Panc1 (cell line): ENCODE measurements at regions of chr15 and their contacts with region 1.

Region 1: DNA sequence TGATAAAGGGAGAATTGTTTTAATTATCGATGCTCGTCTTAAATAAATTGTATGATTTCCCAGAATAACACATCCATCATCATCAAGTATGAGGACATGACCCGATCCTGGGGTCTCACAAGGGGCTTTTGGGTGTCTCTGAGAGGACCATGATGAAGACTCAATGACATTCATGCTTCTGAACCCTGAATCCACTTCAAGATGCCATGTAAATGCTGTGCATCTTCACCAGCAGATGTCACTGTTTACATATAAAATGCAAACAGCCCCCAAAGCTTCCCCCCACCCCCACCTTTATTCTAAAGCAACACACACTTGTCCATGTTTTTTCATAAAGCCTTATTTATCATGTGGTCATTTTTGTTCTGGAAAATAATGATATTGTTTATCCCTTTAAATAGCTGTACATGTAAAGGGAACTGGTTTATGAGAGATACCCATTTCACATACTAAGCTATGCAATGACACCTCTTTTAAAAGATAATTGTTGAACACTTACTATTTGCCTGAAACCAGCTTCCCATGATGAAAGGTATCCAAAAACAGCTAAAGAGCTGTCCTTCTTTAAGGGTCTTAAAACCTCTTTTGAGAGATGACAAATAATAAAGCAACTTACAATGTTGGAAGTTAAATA is 69.7 kb upstream of the UBE3A start:
- DNase-seq: no peak
- ATAC-seq: no peak
- H3K4me3 ChIP-seq: no peak overlapping the region
- H3K27ac ChIP-seq: no peak overlapping the region
- H3K4me1 ChIP-seq: no peaks in the 10 kb centered on the region
- H3K27me3 ChIP-seq: no peaks in the 10 kb centered on the region
- CTCF ChIP-seq: peak; percentile 75

Region 2: DNA sequence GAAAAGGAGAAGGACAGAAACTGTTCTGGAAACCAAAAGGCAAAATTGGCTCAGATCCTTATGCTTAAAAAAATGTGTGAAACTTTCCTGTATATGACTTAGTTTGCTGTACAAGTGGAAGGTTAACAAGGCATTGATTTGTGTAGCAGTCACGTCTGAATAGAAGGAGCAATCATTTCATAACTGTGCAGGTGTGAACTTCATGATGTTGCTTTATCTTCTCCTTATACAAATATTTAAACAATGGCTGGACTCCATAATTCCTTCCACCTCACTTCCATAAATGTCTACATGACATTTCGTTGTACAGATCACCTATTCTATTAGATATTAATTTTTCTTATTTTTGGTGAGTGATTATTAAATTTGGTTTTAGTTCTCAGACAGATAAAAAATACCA is 1215.6 kb before region 1 on chr15:
- CTCF ChIA-PET with region 1: no interaction called
- POLR2A ChIA-PET with region 1: no interaction called
- in situ Hi-C with region 1: no loop called
- intact Hi-C with region 1: no loop called
- DNase-seq: no peak
- ATAC-seq: no peak
- H3K4me3 ChIP-seq: no peak overlapping the region
- H3K27ac ChIP-seq: no peak overlapping the region
- H3K4me1 ChIP-seq: no peaks in the 10 kb centered on the region
- H3K27me3 ChIP-seq: no peaks in the 10 kb centered on the region
- CTCF ChIP-seq: no peak

Region 3: DNA sequence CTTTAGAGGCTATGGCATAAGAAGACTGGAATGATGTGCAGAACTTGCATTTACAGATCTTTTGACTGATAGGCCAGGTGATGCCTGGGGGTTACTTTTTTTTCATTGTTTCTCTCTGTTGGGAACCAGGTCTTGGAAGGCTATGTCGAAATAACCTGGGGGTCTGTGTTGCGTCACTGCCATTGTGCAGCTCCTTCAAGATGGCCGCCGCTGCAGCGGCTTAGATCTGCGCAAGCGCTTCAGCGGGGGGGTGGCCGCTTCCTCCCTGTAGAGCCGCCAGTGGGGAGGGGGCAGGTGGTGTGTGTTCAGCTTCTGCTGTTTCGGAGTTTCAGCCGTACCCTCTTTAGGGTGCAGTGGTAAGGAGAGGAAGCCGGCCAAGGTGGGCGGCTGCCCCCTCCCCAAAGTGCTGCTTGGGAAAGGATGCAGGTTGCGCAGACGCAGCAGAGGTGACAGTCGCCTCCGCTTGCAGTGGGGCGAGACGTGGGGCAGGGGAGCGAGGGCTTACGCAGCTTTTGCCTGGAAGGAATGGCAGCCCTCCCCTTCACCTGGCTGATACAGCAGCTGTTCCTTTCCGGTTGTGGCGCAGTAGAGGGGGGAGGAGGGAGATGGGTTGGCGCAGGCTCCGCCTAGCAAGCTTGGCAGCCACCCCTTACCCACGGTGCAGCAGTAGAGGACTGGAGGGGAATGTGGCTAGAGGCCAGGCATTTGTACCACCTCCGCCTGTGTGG is 552.2 kb before region 1 on chr15:
- CTCF ChIA-PET with region 1: interaction called, 10 read pairs
- POLR2A ChIA-PET with region 1: no interaction called
- in situ Hi-C with region 1: no loop called
- intact Hi-C with region 1: no loop called
- DNase-seq: peak; percentile 25
- ATAC-seq: peak; percentile 92
- H3K4me3 ChIP-seq: peak overlapping the region; percentile 81 to 94
- H3K27ac ChIP-seq: peak overlapping the region; percentile 88
- H3K4me1 ChIP-seq: peaks cover 11% of the 10 kb centered on the region; the same call in 1 of the 2 replicates
- H3K27me3 ChIP-seq: no peaks in the 10 kb centered on the region
- CTCF ChIP-seq: no peak

Region 4: GRCh38 chr15:25568751-25569150 is 60.3 kb after region 1 on chr15:
- CTCF ChIA-PET with region 1: no interaction called
- POLR2A ChIA-PET with region 1: no interaction called
- in situ Hi-C with region 1: no loop called
- intact Hi-C with region 1: no loop called
- DNase-seq: no peak
- ATAC-seq: no peak
- H3K4me3 ChIP-seq: no peak overlapping the region
- H3K27ac ChIP-seq: no peak overlapping the region
- H3K4me1 ChIP-seq: no peaks in the 10 kb centered on the region
- H3K27me3 ChIP-seq: no peaks in the 10 kb centered on the region
- CTCF ChIP-seq: no peak

Region 5: DNA sequence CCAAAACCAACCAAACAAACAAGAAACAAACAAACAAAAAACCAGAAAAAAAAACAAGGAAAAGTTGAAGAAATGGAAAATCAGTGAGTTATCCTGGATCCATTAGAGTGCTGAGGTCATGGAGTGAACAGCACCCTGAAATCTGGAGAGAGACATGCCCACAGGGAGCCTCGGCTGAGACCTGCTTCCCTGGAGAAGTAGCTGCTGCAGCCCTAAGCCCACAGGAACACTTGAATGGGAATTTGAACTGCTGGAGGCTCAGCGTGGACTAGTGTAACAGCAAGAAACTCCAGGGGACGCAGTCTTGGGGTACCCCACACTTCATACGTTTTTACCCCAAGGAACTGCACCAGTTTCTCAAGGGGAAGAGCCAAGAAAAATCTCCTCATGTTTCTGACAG is 74.4 kb after region 1 on chr15:
- CTCF ChIA-PET with region 1: no interaction called
- POLR2A ChIA-PET with region 1: no interaction called
- in situ Hi-C with region 1: no loop called
- intact Hi-C with region 1: no loop called
- DNase-seq: no peak
- ATAC-seq: no peak
- H3K4me3 ChIP-seq: no peak overlapping the region
- H3K27ac ChIP-seq: no peak overlapping the region
- H3K4me1 ChIP-seq: no peaks in the 10 kb centered on the region
- H3K27me3 ChIP-seq: no peaks in the 10 kb centered on the region
- CTCF ChIP-seq: no peak

Region 6: DNA sequence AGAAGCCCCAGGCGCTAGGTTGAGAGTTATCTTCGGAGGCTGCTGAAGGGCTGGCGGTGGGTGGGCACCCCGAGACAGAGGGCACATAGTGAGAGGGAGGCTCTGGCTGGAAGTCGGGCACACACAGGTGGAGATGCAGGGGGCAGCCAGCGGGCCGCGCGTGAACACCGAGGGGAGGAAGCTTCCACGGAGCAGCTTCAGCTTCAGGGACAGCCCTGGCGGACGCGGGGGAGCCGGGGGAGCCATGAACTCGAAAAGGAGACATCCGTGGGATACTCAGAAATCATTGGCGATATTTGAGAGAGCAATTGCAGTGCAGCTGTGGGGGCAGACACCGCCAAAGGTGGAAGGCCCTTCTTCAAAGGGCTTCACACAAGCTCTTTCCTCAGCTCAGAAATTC is 150.1 kb after region 1 on chr15:
- CTCF ChIA-PET with region 1: interaction called, 14 read pairs
- POLR2A ChIA-PET with region 1: no interaction called
- in situ Hi-C with region 1: no loop called
- intact Hi-C with region 1: no loop called
- DNase-seq: no peak
- ATAC-seq: no peak
- H3K4me3 ChIP-seq: no peak overlapping the region
- H3K27ac ChIP-seq: no peak overlapping the region
- H3K4me1 ChIP-seq: no peaks in the 10 kb centered on the region
- H3K27me3 ChIP-seq: no peaks in the 10 kb centered on the region
- CTCF ChIP-seq: no peak

Region 7: DNA sequence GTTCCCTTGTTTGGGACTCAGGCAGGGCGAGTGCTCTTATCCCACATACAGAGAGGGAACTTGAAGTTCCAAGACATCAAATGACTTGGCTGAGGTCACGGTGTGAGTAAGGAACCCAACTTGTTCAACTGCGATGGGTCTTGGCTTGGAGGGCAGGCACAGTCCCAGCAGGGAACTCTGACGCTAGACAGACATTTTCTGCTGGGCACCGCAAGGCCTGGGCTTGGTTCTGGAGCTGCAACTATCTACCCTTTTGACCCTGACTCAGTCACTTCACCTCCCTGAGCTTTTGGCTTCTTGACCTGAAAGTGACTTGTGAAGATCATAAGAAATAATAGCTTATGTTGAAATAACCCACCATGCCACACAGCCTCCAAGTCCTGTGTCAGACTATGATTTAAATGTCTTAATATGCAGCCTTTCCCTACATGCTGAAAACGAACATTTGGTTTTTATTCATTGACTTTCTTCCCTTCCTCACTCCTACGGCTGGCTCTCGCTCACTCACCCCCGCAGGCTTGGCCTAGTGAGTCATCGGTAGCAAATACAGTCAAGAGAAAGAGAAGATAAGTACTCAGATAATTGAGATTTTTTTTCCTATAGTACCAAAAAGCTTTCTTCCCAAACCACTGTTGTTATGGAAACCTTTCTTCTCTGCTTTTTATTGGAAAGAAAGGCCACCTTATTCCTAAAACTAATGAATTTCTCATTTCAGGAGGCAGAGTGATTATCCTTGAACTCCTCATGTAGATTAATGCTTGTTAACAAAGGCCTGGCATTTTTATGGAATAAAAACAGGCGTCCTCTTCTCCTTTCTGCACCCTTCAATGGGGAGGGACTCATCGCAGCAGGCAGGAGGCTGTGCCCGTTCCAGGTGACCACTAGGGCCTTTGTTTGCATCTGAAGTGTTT is 176.3 kb after region 1 on chr15:
- CTCF ChIA-PET with region 1: interaction called, 9 read pairs
- POLR2A ChIA-PET with region 1: no interaction called
- in situ Hi-C with region 1: no loop called
- intact Hi-C with region 1: loop called (anchors 10 kb)
- DNase-seq: no peak
- ATAC-seq: no peak
- H3K4me3 ChIP-seq: no peak overlapping the region
- H3K27ac ChIP-seq: no peak overlapping the region
- H3K4me1 ChIP-seq: no peaks in the 10 kb centered on the region
- H3K27me3 ChIP-seq: no peaks in the 10 kb centered on the region
- CTCF ChIP-seq: no peak

Region 8: DNA sequence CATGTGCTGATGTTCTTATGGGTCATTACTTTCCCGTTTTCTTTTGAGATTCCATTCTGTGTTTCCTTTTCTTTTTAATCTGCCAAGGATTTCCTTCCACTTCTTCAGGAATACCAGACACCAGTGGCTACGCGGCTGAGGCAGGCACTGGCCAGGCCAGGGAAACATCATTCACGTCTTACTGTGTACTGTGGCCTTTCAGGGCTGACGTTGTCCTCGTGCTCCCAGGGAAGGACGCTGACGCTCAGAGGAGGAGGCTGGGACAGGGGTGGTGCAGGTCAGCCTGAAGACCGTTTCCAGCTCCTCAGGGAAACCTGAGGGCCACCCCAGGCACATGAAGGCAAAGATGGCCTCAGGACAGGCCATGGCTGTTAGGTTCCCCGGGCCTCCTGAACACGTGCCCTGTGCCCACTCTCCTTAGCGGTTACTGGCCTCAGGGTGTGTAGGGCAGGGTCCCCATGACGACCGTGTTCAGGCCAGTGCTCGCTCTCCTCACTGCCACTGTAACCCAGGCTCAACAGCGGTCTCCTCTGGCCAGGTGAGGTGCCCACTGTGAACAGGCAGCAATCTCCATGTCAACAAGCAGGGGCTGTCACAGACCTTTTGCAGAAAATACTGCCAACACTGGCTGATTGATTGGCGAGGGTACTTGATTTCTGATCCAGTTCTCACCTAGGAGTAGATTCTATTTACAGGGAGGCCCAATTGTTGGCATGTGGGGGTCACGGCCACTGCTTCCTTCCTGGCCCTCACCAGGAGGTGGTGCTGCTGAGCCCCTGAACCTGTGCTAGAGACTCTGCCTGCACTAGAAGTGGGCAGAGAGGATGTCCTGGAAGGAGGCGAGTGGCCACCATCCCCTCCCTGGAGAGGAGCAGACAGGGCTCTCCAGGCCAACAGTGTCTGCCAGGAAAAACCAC is 185.1 kb after region 1 on chr15:
- CTCF ChIA-PET with region 1: interaction called, 14 read pairs
- POLR2A ChIA-PET with region 1: no interaction called
- in situ Hi-C with region 1: no loop called
- intact Hi-C with region 1: loop called (anchors 10 kb)
- DNase-seq: no peak
- ATAC-seq: no peak
- H3K4me3 ChIP-seq: no peak overlapping the region
- H3K27ac ChIP-seq: no peak overlapping the region
- H3K4me1 ChIP-seq: no peaks in the 10 kb centered on the region
- H3K27me3 ChIP-seq: no peaks in the 10 kb centered on the region
- CTCF ChIP-seq: peak; percentile 75

Region 9: DNA sequence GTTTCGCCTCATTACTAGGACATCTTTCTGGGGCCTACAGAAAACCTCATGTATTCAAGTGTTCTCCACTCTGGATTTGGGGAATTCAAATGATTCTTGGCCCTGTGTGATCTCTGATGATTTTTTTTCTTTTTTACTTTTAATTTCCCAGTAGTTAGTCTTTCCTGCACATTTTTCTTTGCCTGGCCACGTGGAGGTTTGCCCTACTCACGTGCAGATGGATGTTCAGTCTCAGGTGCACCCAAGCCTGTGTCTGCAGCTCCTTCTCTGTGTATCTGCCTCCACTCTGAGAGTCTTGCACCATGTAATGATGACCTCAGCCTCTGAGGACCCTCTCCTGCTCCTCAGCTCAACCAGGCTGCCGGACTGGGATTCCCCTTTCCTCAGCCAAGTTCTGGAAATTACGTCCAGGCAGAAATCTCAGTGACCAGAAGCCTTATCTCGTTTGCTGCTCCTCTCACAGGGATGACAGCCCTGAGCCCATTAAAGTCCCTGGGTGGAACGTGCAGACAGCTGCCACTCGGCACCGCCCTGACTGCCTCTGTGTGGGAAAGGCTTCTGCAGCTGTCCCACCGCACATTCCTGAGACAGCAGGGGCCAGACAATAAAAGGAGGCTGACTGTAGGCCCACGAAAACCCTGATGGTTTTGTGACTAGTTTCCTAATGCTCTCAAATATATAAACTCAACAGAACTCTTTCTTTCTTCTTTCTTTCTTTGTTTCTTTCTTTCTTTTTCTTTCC is 1295.7 kb after region 1 on chr15:
- CTCF ChIA-PET with region 1: interaction called, 12 read pairs
- POLR2A ChIA-PET with region 1: no interaction called
- in situ Hi-C with region 1: no loop called
- intact Hi-C with region 1: no loop called
- DNase-seq: no peak
- ATAC-seq: no peak
- H3K4me3 ChIP-seq: no peak overlapping the region
- H3K27ac ChIP-seq: no peak overlapping the region
- H3K4me1 ChIP-seq: no peaks in the 10 kb centered on the region
- H3K27me3 ChIP-seq: no peaks in the 10 kb centered on the region
- CTCF ChIP-seq: no peak

Region 10: DNA sequence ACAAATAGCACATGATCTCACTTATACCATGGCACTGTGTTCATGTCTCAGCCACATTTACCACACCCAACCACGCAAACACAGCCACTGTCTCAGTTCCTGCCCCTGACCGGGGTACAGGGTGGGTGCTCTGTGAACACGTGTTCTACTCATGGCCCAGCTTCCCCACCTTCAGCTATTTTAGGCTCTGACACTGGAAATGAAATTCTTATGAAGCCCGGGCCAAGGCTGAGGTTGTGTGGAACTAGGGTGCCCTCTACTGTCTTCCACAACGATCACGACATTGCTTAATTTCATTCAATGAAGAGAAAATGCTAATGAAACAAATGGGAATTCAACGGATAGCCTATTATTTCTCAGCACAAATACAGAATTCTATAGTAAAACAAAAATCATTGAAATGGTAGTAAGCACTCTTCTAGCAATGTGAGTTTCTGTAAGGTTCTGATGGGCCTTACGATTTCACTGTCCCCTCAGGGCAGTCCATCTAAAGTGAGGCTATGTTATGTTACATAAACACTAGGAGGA is 1356.2 kb after region 1 on chr15:
- CTCF ChIA-PET with region 1: no interaction called
- POLR2A ChIA-PET with region 1: no interaction called
- in situ Hi-C with region 1: no loop called
- intact Hi-C with region 1: loop called (anchors 10 kb)
- DNase-seq: no peak
- ATAC-seq: peak; percentile 69
- H3K4me3 ChIP-seq: no peak overlapping the region
- H3K27ac ChIP-seq: no peak overlapping the region
- H3K4me1 ChIP-seq: no peaks in the 10 kb centered on the region
- H3K27me3 ChIP-seq: no peaks in the 10 kb centered on the region
- CTCF ChIP-seq: peak; percentile 77